Activated B cell treated with CpG ODN at 0.5 μM for 24 hours (primary cell): ENCODE measurements at regions of chr2 and their contacts with region 1.

Region 1: GRCh38 chr2:222860740-222861410 is at the start of gene ACSL3:
- DNase-seq: peak; percentile 90
- ATAC-seq: peak; percentile 97
- H3K4me3 Mint-ChIP-seq: peak within 1 kb of the TSS; percentile 81
- H3K27ac Mint-ChIP-seq: peak within 1 kb of the TSS; percentile 87
- H3K4me1 Mint-ChIP-seq: peaks cover 7% of the 10 kb centered on the region
- H3K27me3 Mint-ChIP-seq: no peaks in the 10 kb centered on the region
- CTCF ChIP-seq: no peak
- total RNA-seq, gene ACSL3: 40.6 and 41.2 TPM in 2 replicates

Region 2: DNA sequence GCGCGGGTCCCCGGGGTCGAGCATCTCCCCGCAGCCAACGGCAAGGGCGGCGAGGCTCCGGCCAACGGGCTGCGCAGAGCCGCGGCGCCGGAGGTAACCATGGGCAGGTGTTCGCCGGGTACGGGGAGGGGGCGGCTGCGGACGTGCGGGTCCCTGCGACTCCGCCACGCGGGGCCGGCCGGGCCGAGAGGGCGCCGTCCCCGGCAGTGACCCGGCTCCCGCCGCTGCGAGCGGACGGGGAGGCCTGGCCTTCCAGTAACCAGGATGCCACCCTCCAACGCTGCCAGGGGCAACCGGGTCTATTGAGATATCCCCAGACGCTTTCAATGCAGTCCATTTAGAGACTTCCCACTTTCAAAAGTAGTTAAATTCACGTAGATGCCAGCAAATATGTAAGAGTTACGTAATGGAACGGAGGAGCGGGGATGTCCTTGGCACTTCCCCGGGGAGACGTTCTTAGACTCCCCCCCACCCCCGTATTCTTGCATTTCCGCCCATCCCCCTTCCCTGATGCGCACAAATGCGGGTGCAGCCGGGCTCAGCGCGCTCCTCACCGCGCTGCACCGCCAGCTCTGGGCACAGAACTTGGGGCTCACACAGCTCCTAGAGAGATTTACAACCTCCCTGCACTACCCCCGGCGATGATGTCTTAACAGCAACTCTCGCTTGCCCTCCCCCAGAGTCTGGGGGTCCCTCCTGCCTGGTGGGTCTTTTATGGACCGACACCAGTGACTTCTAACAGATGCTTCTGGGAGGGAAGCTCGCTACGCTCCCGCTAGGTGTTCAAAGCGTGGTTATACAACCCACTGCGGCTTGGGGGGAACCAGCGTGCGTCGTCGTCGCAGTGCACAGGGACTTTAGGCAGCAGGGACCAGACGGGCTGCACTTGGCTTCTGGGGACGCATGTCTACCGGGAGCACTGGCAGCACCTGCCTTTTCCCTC is 435.9 kb before region 1 on chr2:
- CTCF ChIA-PET with region 1: no interaction called
- POLR2A ChIA-PET with region 1: no interaction called
- intact Hi-C with region 1: loop called (anchors 5 kb)
- DNase-seq: peak; percentile 32
- ATAC-seq: peak; percentile 42
- H3K4me3 Mint-ChIP-seq: peak overlapping the region; percentile 90
- H3K27ac Mint-ChIP-seq: peak overlapping the region; percentile 81
- H3K4me1 Mint-ChIP-seq: peaks cover 47% of the 10 kb centered on the region
- H3K27me3 Mint-ChIP-seq: peaks cover 23% of the 10 kb centered on the region
- CTCF ChIP-seq: no peak

Region 3: DNA sequence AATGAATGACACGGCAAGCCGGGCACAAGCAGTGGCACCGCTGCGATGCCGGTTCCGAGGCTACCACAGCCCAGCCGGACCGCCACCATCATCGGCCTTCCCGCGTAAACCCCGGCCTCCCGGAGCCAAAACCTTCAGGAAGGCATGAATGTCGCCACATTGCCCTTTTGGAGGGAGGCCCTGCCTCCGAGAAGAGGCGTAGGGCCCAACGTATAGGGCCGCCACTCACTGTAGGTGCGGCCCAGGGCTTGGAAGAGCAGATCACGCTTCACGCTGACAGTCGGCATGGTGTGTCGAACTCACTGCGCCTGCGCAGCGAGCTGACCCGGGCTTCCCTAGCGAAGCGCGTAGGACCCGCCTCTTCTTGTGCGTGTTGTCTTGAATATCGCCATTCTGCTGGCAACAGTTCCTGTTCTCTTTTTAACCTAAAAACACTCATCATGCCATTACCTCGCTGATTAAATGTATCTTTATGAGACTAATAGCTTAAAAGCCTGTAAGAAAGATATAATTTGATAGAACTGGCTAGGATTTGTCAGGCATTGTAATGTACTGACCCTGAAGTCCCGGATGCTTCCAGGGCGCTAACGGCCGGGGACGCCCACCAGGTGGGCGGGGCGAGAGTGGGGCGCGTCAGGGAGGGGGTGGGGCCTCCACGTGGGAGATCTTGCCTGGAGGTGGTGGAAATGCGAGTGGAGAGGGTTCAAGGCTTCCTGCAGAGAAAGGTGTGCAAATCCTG is 204.9 kb before region 1 on chr2 and contains the start of gene FARSB:
- CTCF ChIA-PET with region 1: no interaction called
- POLR2A ChIA-PET with region 1: interaction called, 7 read pairs
- intact Hi-C with region 1: loop called (anchors 1 kb)
- DNase-seq: peak; percentile 81
- ATAC-seq: peak; percentile 93
- H3K4me3 Mint-ChIP-seq: peak within 1 kb of the TSS; percentile 97
- H3K27ac Mint-ChIP-seq: peak within 1 kb of the TSS; percentile 99
- H3K4me1 Mint-ChIP-seq: peaks cover 47% of the 10 kb centered on the region
- H3K27me3 Mint-ChIP-seq: no peaks in the 10 kb centered on the region
- CTCF ChIP-seq: no peak
- total RNA-seq, gene FARSB: 21.6 and 23.3 TPM in 2 replicates

Region 4: GRCh38 chr2:222792001-222792611 is 68.8 kb before region 1 on chr2:
- CTCF ChIA-PET with region 1: no interaction called
- POLR2A ChIA-PET with region 1: no interaction called
- intact Hi-C with region 1: loop called (anchors 5 kb)
- DNase-seq: no peak
- ATAC-seq: no peak
- H3K4me3 Mint-ChIP-seq: no peak overlapping the region
- H3K27ac Mint-ChIP-seq: no peak overlapping the region
- H3K4me1 Mint-ChIP-seq: peaks cover 12% of the 10 kb centered on the region
- H3K27me3 Mint-ChIP-seq: no peaks in the 10 kb centered on the region
- CTCF ChIP-seq: no peak

Region 5: DNA sequence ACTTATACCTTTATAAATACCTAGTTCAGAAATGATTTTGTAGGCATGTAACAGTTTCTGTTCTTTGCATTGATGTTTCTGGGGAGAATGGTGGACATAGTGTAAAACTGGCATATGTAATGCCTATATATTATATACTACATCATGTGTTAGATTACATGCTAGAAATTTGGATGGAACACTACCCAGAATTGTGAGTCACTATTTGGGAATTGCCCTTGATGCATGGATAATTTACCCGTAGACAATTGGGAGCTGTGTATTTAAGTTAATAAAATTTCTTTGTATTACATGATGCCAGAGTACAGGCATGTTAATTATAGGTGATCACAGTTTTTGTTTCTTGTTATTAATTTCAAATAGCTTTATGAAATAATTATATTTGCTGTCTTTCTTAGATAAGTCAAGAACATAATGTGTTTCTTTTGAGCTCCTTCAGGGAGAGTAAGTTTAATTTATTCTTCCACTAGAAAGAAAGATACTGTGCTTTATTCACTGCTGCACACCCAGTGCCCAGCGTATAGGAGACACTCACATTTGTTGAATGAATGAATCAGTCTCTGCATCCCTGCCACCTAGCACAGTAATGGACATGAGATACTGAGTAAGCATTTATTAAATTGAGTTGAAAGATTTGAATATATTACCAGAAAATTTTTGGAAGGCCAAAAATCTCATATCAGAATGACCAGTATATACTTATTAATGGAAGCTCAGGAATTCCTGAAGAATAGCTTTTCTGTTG is 16.9 kb after region 1 on chr2:
- CTCF ChIA-PET with region 1: no interaction called
- POLR2A ChIA-PET with region 1: interaction called, 4 read pairs
- intact Hi-C with region 1: loop called (anchors 2 kb)
- DNase-seq: no peak
- ATAC-seq: no peak
- H3K4me3 Mint-ChIP-seq: no peak overlapping the region
- H3K27ac Mint-ChIP-seq: no peak overlapping the region
- H3K4me1 Mint-ChIP-seq: peaks cover 36% of the 10 kb centered on the region
- H3K27me3 Mint-ChIP-seq: no peaks in the 10 kb centered on the region
- CTCF ChIP-seq: no peak

Region 6: GRCh38 chr2:222903234-222904220 is 42.7 kb after region 1 on chr2:
- CTCF ChIA-PET with region 1: interaction called, 6 read pairs
- POLR2A ChIA-PET with region 1: no interaction called
- intact Hi-C with region 1: loop called (anchors 2 kb)
- DNase-seq: no peak
- ATAC-seq: peak; percentile 69
- H3K4me3 Mint-ChIP-seq: no peak overlapping the region
- H3K27ac Mint-ChIP-seq: no peak overlapping the region
- H3K4me1 Mint-ChIP-seq: peaks cover 9% of the 10 kb centered on the region
- H3K27me3 Mint-ChIP-seq: no peaks in the 10 kb centered on the region
- CTCF ChIP-seq: no peak